ENCODE measurements at regions of chr1 and their contacts with region 1.

Region 1: DNA sequence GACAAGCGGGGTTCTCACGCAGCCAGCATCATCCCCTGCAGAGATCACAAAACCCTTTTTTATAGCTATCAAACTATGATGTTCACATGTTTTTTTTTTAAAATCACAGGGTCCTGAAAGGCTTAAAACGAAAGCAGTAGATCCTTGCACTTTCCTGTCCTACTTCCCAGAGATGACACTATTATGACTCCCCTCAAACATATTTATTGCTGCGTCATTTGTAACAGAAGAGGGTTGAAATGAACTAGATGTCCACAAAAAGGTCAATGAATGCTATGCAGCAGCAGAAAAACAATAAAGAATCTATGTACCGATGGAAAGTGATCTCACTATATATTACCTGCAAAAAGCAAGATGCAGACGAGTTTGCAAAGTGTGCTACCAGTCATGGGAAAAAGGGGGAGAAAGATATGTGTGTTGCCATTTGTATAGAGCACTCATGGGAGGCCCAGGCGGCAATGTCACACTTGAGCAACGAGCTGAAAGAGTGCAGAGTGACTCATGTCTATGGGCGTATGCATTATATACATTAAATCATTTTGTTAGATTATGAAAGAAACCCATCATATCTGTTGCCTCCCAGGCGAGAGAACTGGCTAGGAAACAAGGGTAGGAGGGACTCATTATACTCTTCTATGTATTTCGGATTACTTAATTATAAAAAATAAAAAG is 68.9 kb upstream of the PARP1 start:
- DNase-seq: peak; percentile 59
- H3K4me3 ChIP-seq: no peak overlapping the region
- H3K27ac ChIP-seq: no peak overlapping the region
- H3K4me1 ChIP-seq: peaks cover 39% of the 10 kb centered on the region
- H3K27me3 ChIP-seq: no peaks in the 10 kb centered on the region
- CTCF ChIP-seq: no peak

Region 2: GRCh38 chr1:226397955-226398636 is 78.7 kb before region 1 on chr1:
- CTCF ChIA-PET with region 1: no interaction called
- POLR2A ChIA-PET with region 1: no interaction called
- intact Hi-C with region 1: no loop called
- DNase-seq: no peak
- H3K4me3 ChIP-seq: no peak overlapping the region
- H3K27ac ChIP-seq: no peak overlapping the region
- H3K4me1 ChIP-seq: peaks cover 9% of the 10 kb centered on the region
- H3K27me3 ChIP-seq: no peaks in the 10 kb centered on the region
- CTCF ChIP-seq: no peak

Region 3: GRCh38 chr1:226510453-226510852 is 33.7 kb after region 1 on chr1:
- CTCF ChIA-PET with region 1: interaction called, 10 read pairs
- POLR2A ChIA-PET with region 1: no interaction called
- intact Hi-C with region 1: no loop called
- DNase-seq: no peak
- H3K4me3 ChIP-seq: no peak overlapping the region
- H3K27ac ChIP-seq: no peak overlapping the region
- H3K4me1 ChIP-seq: no peaks in the 10 kb centered on the region
- H3K27me3 ChIP-seq: no peaks in the 10 kb centered on the region
- CTCF ChIP-seq: no peak